Activated CD8-positive, alpha-beta T cell treated with anti-CD3 and anti-CD28 coated beads for 36 hours (primary cell): ENCODE measurements at regions of chr1 and their contacts with region 1.

Region 1: GRCh38 chr1:114346480-114347029 is 164.4 kb downstream of the TRIM33 start:
- DNase-seq: peak; percentile 97
- ATAC-seq: peak; percentile 99
- H3K4me3 Mint-ChIP-seq: peak overlapping the region; percentile 75
- H3K27ac Mint-ChIP-seq: peak overlapping the region; percentile 91
- H3K4me1 Mint-ChIP-seq: peaks cover 24% of the 10 kb centered on the region
- H3K27me3 Mint-ChIP-seq: no peaks in the 10 kb centered on the region
- CTCF ChIP-seq: peak; percentile 100

Region 2: GRCh38 chr1:113978863-113979702 is 367.5 kb before region 1 on chr1 and contains the start of gene OLFML3:
- CTCF ChIA-PET with region 1: interaction called, 11 read pairs
- POLR2A ChIA-PET with region 1: no interaction called
- intact Hi-C with region 1: no loop called
- DNase-seq: peak; percentile 82
- ATAC-seq: peak; percentile 22
- H3K4me3 Mint-ChIP-seq: no peak within 1 kb of the TSS
- H3K27ac Mint-ChIP-seq: no peak within 1 kb of the TSS
- H3K4me1 Mint-ChIP-seq: peaks cover 44% of the 10 kb centered on the region
- H3K27me3 Mint-ChIP-seq: no peaks in the 10 kb centered on the region
- CTCF ChIP-seq: peak; percentile 84
- total RNA-seq, gene OLFML3: 0.14 to 0.49 TPM

Region 3: GRCh38 chr1:114330451-114330983 is 16.0 kb before region 1 on chr1:
- CTCF ChIA-PET with region 1: interaction called, 16 read pairs
- POLR2A ChIA-PET with region 1: interaction called, 5 read pairs
- intact Hi-C with region 1: no loop called
- DNase-seq: peak; percentile 37
- ATAC-seq: peak; percentile 73
- H3K4me3 Mint-ChIP-seq: no peak overlapping the region
- H3K27ac Mint-ChIP-seq: peak overlapping the region; percentile 1
- H3K4me1 Mint-ChIP-seq: peaks cover 59% of the 10 kb centered on the region
- H3K27me3 Mint-ChIP-seq: no peaks in the 10 kb centered on the region
- CTCF ChIP-seq: no peak

Region 4: DNA sequence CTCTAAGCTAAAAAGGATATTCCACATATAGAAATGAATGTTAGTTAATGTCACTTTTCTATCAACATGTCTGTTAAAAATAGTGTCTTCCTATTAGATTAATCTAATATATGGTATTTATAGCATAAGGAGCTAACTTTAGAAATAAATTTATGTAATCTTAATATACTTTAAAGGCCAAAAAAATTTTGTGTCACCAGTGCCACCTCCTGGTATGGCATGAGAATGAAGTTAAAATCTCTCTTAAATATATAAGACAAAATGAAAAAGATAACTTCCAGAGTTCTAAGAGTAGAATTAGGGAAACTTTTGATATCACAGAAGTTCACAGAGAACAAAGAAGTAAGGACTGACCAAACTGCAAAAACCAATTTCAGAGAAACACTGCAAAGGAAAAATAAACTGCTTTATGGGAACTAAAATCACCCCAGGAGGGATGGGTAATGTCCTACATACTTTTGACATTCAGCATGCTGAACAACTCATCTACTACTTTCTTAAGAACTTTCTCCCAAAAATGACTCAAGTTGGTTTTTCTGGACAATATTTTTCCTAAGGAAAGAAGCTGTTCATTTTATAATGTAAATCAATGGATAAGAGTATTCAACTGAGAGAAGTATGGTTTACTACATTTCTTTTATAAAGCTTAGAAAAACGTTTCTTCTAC is 81.7 kb after region 1 on chr1:
- CTCF ChIA-PET with region 1: interaction called, 15 read pairs
- POLR2A ChIA-PET with region 1: no interaction called
- intact Hi-C with region 1: no loop called
- DNase-seq: peak; percentile 19
- ATAC-seq: no peak
- H3K4me3 Mint-ChIP-seq: no peak overlapping the region
- H3K27ac Mint-ChIP-seq: no peak overlapping the region
- H3K4me1 Mint-ChIP-seq: no peaks in the 10 kb centered on the region
- H3K27me3 Mint-ChIP-seq: no peaks in the 10 kb centered on the region
- CTCF ChIP-seq: peak; percentile 65

Region 5: DNA sequence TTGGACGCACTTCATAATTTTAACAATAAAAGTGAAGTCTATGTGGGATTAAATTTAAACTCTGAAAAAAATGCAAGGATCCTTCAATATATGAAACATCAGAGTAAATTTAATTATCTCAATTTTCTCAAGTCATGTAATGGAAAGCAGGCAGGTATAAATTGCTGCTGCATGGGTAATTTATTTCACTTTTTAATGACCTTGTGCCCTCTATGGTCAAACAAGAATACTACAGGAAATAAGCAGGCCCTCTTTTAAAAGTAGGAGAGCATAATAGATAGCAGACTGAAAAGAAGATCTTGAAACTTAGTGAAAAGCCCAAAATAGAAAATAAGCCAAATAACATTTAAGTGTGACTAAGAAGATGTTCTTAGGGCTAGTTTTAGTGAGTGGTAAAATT is 212.0 kb after region 1 on chr1:
- CTCF ChIA-PET with region 1: interaction called, 7 read pairs
- POLR2A ChIA-PET with region 1: no interaction called
- intact Hi-C with region 1: loop called (anchors 10 kb)
- DNase-seq: no peak
- ATAC-seq: no peak
- H3K4me3 Mint-ChIP-seq: no peak overlapping the region
- H3K27ac Mint-ChIP-seq: no peak overlapping the region
- H3K4me1 Mint-ChIP-seq: no peaks in the 10 kb centered on the region
- H3K27me3 Mint-ChIP-seq: no peaks in the 10 kb centered on the region
- CTCF ChIP-seq: peak; percentile 63

Region 6: GRCh38 chr1:114670083-114671010 is 323.8 kb after region 1 on chr1:
- CTCF ChIA-PET with region 1: interaction called, 17 read pairs
- POLR2A ChIA-PET with region 1: no interaction called
- intact Hi-C with region 1: no loop called
- DNase-seq: peak; percentile 92
- ATAC-seq: peak; percentile 97
- H3K4me3 Mint-ChIP-seq: peak overlapping the region; percentile 86
- H3K27ac Mint-ChIP-seq: peak overlapping the region; percentile 68
- H3K4me1 Mint-ChIP-seq: peaks cover 10% of the 10 kb centered on the region
- H3K27me3 Mint-ChIP-seq: peaks cover 7% of the 10 kb centered on the region
- CTCF ChIP-seq: no peak